ENCODE measurements at regions of chr5 and their contacts with region 1.

Region 1: DNA sequence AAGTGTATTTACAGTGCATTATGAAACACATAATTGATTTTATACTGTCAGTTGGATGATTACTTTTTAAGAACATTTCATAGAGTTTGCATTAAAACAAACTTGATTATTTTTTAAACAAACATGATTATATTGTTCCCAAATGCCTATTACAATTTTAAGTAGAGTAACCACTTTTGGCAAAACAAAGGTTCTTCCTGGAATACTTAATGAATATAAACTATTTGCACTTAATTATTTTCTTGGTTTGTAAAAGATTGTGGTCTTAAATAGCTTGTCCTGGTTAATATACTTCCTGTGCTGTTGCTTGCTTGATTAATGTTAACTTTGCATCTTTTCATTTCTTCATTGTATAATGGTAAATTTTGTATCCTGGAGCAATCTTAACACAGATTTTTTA is 180.0 kb downstream of the CDH12 start:
- DNase-seq: no peak
- H3K4me3 ChIP-seq: no peak overlapping the region
- H3K27ac ChIP-seq: no peak overlapping the region
- H3K4me1 ChIP-seq: no peaks in the 10 kb centered on the region
- H3K27me3 ChIP-seq: no peaks in the 10 kb centered on the region
- CTCF ChIP-seq: no peak

Region 2: DNA sequence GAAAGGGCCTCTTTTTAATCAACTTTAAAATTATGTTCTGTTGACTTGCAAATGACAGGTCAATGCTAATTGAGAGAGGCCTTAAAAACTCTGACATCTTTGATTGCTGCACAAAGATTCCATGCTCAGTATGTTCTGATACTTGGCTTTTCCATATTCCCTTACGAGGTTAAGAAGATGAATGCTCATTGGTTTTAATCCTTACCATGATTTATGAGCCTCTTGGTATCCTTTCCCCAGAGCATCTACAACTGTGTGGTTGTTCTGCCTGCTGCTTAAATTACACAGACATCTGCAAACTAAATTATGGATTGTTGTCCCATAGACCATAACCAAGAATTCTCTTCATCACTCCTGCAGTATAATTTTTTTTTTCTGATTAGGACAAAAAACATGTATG is 172.6 kb before region 1 on chr5:
- CTCF ChIA-PET with region 1: no interaction called
- dilution Hi-C with region 1: no loop called
- in situ Hi-C with region 1: no loop called
- intact Hi-C with region 1: no loop called
- DNase-seq: no peak
- H3K4me3 ChIP-seq: no peak overlapping the region
- H3K27ac ChIP-seq: no peak overlapping the region
- H3K4me1 ChIP-seq: peaks cover 12% of the 10 kb centered on the region
- H3K27me3 ChIP-seq: no peaks in the 10 kb centered on the region
- CTCF ChIP-seq: no peak

Region 3: DNA sequence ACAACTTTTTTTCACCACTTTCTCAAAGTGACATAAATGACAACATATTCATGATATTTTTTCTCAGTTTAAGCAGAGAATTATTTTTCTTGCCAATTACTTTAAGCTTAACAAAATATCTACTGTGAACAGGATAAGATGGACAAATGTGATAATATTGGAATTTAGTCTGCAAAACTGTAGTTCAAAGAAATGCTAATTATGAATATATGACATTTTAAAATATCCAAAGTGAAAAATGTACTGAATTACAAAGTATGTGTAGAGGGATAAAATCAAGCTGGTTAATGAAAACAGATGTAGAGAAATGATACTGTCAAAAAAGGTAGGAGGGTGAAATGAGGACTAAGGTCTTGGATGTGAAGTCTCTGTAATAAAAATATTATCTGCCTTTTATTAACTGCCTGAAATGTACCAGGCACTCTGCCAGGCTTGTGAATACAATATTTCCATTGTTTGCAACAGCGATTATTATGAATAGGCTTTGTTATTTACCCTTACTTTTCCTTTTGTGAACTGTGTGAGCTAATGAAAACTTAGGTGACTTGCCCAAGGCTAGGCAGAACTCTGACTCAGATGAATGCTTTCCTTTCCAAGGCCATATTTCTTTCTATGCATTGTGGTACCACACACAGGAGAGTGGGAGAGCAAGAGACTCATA is 24.2 kb before region 1 on chr5:
- CTCF ChIA-PET with region 1: no interaction called
- dilution Hi-C with region 1: no loop called
- in situ Hi-C with region 1: no loop called
- intact Hi-C with region 1: loop called (anchors 2 kb)
- DNase-seq: peak; percentile 92
- H3K4me3 ChIP-seq: no peak overlapping the region
- H3K27ac ChIP-seq: peak overlapping the region; percentile 51
- H3K4me1 ChIP-seq: peaks cover 17% of the 10 kb centered on the region
- H3K27me3 ChIP-seq: no peaks in the 10 kb centered on the region
- CTCF ChIP-seq: no peak

Measured in mammary epithelial cell (primary cell).